Transverse colon (tissue), 4 donors: ENCODE measurements at regions of chr11 and their contacts with region 1.

Region 1: GRCh38 chr11:131389582-131389981 is 19.2 kb downstream of the NTM start:
- DNase-seq: no peak
- H3K4me3 ChIP-seq: no peak overlapping the region
- H3K27ac ChIP-seq: no peak overlapping the region
- H3K4me1 ChIP-seq: peaks cover 0 to 12% (median 3%) of the 10 kb centered on the region in 4 donors
- H3K27me3 ChIP-seq: no peaks in the 10 kb centered on the region
- CTCF ChIP-seq: no peak
- EP300 ChIP-seq: no peak
- POLR2A ChIP-seq: no peak

Region 2: DNA sequence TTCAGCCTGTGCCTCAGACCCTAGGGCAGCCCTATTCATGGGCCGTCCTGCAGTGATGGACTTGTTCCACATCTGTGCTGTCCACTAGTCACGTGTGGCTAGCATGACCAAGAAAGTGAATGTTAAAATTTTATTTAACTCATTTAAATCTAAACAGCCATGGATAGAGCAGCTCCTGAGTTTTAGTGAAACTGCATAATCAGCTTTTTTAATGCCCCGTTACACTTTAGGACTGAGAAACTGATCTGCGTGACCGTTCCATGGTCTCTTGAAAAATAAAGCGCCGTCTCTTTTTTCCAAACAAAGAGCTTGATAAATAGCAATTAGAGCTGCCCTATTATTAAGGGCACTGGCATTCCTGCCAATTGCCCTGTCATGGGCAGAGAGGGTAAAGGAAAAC is 396.8 kb before region 1 on chr11:
- in situ Hi-C with region 1: no loop called
- intact Hi-C with region 1: no loop called
- DNase-seq: no peak
- H3K4me3 ChIP-seq: no peak overlapping the region
- H3K27ac ChIP-seq: no peak overlapping the region
- H3K4me1 ChIP-seq: no peaks in the 10 kb centered on the region
- H3K27me3 ChIP-seq: no peaks in the 10 kb centered on the region
- CTCF ChIP-seq: no peak
- EP300 ChIP-seq: no peak
- POLR2A ChIP-seq: no peak

Region 3: DNA sequence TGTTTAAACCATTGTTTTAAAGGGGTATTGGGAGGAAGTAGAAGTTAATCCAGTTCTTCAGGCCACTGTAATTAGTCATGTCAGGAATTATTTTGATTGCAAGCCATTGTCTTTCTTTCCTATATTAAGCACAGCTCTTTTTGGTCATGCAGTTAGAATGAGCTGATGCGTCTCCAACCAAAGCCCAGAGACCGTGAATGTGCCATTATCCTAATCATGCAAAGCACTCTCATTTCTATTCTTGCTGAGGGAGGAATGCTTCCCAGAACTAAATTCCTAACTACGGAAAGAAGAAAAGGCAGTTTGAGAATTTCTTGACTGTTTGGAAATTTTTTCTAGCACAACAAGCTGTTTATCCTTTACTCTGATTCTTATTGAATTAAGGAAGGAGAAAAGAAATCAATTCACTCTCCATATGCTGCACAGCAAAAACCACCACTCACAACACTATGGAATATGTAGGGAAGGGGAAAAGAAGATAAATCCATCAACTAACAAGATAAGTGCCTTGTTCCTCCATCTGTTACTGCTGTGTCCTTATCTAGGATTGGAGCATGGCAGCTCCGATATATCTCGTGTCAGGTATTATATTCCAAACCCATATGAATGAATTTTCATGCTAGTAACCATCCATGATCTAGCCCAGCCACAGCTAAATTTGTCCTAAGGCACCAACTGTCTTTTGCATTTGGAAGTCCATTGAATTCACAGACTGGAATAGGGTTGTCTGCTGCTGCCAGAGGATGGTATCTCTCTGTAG is 51.6 kb after region 1 on chr11:
- in situ Hi-C with region 1: no loop called
- intact Hi-C with region 1: no loop called
- DNase-seq: no peak
- H3K4me3 ChIP-seq: no peak overlapping the region
- H3K27ac ChIP-seq: no peak overlapping the region
- H3K4me1 ChIP-seq: no peaks in the 10 kb centered on the region
- H3K27me3 ChIP-seq: no peaks in the 10 kb centered on the region
- CTCF ChIP-seq: no peak
- EP300 ChIP-seq: no peak
- POLR2A ChIP-seq: no peak

Region 4: DNA sequence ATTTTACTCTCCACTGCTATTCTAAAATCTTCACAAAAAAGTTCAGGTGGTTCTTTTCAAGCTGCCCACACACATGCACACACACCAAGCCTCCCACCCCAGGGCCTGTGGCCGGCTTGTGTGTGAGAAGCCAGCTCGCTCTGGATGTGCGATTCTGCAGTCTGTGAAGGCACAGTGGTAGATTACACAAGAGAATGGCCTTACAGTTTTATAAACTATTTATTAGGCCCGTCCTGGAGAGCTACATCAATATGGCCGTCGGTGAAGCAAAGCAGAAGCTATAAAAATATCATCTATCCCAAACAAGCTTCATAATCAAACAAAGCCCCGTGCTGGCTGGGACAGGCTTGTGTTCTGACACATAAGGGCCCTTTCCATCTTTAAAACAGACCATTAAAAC is 1902.2 kb after region 1 on chr11:
- in situ Hi-C with region 1: no loop called
- intact Hi-C with region 1: loop called (anchors 5 kb)
- DNase-seq: no peak
- H3K4me3 ChIP-seq: no peak overlapping the region
- H3K27ac ChIP-seq: peak overlapping the region in 1 of 4 donors; percentile 7
- H3K4me1 ChIP-seq: no peaks in the 10 kb centered on the region
- H3K27me3 ChIP-seq: peaks cover 4% of the 10 kb centered on the region
- CTCF ChIP-seq: no peak
- EP300 ChIP-seq: no peak
- POLR2A ChIP-seq: no peak